HAP-1 (cell line): ENCODE measurements at regions of chr20 and their contacts with region 1.

Region 1: GRCh38 chr20:52083627-52084232 is 107.8 kb downstream of the ZFP64 start:
- DNase-seq: peak; percentile 76 to 84
- H3K4me3 ChIP-seq: no peak overlapping the region
- H3K4me1 ChIP-seq: peaks cover 3% of the 10 kb centered on the region; the same call in 1 of the 2 replicates
- H3K27me3 ChIP-seq: no peaks in the 10 kb centered on the region

Region 2: GRCh38 chr20:51639206-51639832 is 444.4 kb before region 1 on chr20:
- in situ Hi-C with region 1: loop called (anchors 5 kb)
- DNase-seq: peak; percentile 65 to 90
- H3K4me3 ChIP-seq: no peak overlapping the region
- H3K4me1 ChIP-seq: no peaks in the 10 kb centered on the region
- H3K27me3 ChIP-seq: no peaks in the 10 kb centered on the region

Region 3: GRCh38 chr20:51860111-51860882 is 223.4 kb before region 1 on chr20:
- in situ Hi-C with region 1: no loop called
- DNase-seq: no peak
- H3K4me3 ChIP-seq: no peak overlapping the region
- H3K4me1 ChIP-seq: peaks cover 16% of the 10 kb centered on the region
- H3K27me3 ChIP-seq: no peaks in the 10 kb centered on the region

Region 4: DNA sequence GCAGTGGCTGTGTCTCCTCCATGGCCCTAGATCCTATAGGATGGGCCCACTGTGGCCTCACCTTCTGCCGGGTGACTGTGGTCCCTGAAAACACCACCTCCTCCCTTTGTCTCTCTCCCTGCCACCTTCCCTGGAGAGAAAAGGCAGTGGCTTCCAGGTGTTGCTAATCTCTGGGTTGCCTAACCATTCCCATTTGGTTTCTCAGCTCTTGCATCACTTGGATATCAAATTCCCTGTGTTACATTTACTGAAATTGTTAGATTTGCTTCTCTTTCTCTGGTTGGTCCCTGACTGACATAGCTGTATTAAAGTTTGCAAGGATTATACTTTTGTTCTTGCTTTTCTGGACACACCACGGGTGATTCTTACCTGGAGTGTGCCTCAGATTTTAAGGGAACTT is 117.1 kb after region 1 on chr20:
- in situ Hi-C with region 1: no loop called
- DNase-seq: no peak
- H3K4me3 ChIP-seq: no peak overlapping the region
- H3K4me1 ChIP-seq: no peaks in the 10 kb centered on the region
- H3K27me3 ChIP-seq: no peaks in the 10 kb centered on the region